GM10248 (cell line): ENCODE measurements at regions of chr6 and their contacts with region 1.

Region 1: DNA sequence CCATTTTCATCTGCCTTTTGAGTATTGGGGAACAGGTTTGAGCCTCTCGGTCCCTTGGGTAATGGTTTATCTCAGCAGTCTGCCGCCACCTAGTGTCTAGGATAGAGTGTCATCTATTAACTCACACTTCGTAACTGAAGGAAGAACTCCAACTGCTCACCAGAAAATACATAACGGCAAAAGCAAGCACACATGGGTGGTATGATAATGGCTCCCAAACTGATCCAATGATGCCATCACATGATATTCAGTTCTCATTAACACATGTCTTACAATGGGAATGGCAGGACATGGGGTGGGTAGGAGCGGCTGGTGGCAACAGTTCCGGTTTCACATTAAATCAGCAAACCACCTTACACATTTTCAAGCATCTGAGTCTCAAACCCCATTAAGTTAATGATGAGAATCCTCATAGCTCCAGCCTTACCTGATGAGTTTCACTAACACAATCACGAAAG is 110.7 kb upstream of the PHACTR1 start:
- DNase-seq: no peak
- CTCF ChIP-seq: peak; percentile 56

Region 2: GRCh38 chr6:11585426-11586016 is 1020.4 kb before region 1 on chr6:
- CTCF ChIA-PET with region 1: interaction called, 21 read pairs
- POLR2A ChIA-PET with region 1: no interaction called
- DNase-seq: peak; percentile 52
- CTCF ChIP-seq: peak; percentile 57

Region 3: GRCh38 chr6:12575961-12576360 is 30.0 kb before region 1 on chr6:
- CTCF ChIA-PET with region 1: no interaction called
- POLR2A ChIA-PET with region 1: no interaction called
- DNase-seq: no peak
- CTCF ChIP-seq: no peak

Region 4: DNA sequence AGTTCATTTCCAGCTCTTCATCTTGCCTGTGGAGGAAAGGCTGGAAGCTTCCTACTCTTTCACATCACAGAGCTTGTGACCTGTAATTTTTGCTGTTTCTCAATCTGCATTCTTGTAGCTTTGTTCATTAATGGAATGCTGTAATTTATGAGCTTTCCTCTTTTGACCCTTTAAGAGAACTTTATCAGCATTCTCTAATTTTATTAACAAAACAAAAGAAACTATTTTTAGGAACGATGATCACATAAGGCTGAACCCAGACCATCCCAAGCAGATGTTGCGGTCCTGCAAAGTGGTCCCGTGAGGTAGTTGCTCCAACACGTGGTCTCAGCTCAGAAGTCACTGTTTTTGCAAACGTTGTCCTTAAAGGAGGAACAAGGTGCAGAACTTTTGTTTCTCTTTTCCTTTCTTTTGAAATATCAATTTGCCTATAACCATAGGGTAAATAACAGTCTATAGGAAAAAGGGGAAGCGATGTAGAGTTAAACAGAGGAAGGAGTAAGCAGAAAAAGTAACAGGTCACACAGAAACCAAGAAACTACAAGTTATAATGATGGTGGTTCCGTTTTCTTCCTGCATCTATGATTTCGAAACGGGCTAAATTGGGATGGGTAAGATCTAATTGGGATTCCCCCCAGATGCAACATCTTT is 10.6 kb before region 1 on chr6:
- CTCF ChIA-PET with region 1: interaction called, 13 read pairs
- POLR2A ChIA-PET with region 1: no interaction called
- DNase-seq: no peak
- CTCF ChIP-seq: no peak

Region 5: DNA sequence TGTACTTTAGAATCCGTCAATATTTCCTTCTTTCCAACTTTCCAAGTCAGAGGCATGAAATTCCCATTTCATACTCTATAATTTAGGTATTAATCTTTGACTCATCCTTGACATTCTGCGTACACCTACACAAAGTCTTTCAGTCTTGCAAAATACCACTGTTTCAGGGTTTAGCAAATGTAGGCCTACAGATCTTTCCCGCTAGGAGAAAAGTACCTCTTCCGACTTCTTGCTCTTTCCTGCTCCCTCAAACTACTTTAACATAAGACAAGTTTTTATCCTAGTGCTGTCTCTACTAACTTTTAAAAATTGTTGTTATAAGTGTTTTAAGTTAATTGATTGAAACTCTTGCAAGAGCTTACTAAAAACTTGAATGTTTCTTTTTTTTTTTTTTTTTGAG is 92.4 kb after region 1 on chr6:
- CTCF ChIA-PET with region 1: no interaction called
- POLR2A ChIA-PET with region 1: no interaction called
- DNase-seq: no peak
- CTCF ChIP-seq: no peak